Tibial artery (tissue), 4 donors: ENCODE measurements at regions of chr18 and their contacts with region 1.

Region 1: DNA sequence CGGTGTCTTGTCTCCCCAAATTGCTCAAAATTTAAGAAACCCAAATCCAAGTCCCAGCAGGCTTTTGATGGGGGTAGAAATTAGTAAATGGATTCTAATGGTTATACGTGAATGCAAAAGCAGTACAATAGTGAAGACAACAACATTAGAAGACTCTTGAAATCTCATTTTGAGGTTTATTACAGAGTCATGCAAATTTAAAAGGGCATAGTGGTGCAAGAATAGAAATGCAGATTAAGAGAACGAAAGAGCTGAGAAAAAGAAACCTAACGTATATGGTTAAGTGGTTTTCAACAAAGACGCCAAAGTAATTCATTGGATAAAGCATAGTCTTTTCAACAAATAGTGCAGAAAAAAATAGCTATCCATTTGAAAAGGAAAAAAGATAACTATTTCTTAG is 33.2 kb upstream of the CXXC1 start:
- DNase-seq: no peak
- H3K4me3 ChIP-seq: no peak overlapping the region
- H3K27ac ChIP-seq: no peak overlapping the region
- H3K4me1 ChIP-seq: no peaks in the 10 kb centered on the region
- H3K27me3 ChIP-seq: no peaks in the 10 kb centered on the region
- CTCF ChIP-seq: no peak

Region 2: DNA sequence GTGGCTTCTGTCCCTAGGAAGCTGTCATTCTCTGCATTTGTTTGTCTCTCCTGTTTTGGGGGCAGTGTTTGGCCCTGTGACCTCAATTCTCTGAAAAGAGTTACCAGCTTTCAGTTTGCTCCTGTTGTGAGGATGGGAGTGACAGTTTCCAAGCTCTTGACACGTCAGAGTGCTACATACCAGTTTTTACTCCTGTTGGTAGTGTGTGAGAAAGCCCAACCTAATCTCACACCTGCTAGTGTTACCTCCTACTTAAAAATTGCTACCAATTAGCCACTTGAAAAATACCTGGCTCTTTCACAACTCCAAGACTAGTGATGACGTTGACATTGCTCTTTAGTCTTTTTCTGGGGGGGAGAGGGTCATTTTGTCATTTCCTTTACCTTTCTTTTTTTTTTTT is 68.3 kb after region 1 on chr18:
- intact Hi-C with region 1: loop called (anchors 10 kb)
- DNase-seq: no peak
- H3K4me3 ChIP-seq: no peak overlapping the region
- H3K27ac ChIP-seq: no peak overlapping the region
- H3K4me1 ChIP-seq: no peaks in the 10 kb centered on the region
- H3K27me3 ChIP-seq: no peaks in the 10 kb centered on the region
- CTCF ChIP-seq: no peak

Region 3: DNA sequence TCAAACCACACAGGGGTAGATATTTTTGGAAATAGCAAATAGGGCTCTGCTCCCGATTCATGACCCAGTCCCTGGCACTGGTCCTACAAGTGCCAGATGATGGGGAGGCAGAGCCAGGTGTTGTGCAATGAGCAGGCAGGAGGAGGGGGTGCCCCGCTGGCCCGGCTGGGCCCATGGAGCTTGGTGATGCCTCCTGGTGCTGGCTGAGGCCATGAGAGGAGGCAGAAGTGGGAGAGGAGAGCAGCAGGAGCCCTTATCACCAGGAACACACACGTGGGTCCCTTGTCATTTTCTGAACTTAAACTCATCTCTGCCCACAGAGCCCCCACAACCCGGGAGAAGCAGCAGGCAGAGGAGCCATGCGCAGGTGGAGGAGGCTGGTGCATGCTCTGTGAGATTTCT is 148.7 kb after region 1 on chr18:
- intact Hi-C with region 1: no loop called
- DNase-seq: peak; percentile 32 to 73
- H3K4me3 ChIP-seq: no peak overlapping the region
- H3K27ac ChIP-seq: no peak overlapping the region
- H3K4me1 ChIP-seq: peaks cover 0 to 12% (median 4%) of the 10 kb centered on the region in 4 donors
- H3K27me3 ChIP-seq: peaks cover 0 to 5% of the 10 kb centered on the region in 2 donors
- CTCF ChIP-seq: no peak